ENCODE measurements at regions of chr6 and their contacts with region 1.

Region 1: GRCh38 chr6:106512048-106512967 is 117.0 kb downstream of the RTN4IP1 start:
- DNase-seq: peak; percentile 68 to 83 (median 78)
- ATAC-seq: peak; percentile 86
- H3K4me3 ChIP-seq: peak overlapping the region; percentile 92
- H3K4me3 Mint-ChIP-seq: peak overlapping the region; percentile 89 to 98 (median 96)
- H3K27ac ChIP-seq: peak overlapping the region; percentile 100
- H3K27ac Mint-ChIP-seq: peak overlapping the region; percentile 92 to 99 (median 96)
- H3K4me1 ChIP-seq: peaks cover 28 to 41% of the 10 kb centered on the region in 2 donors
- H3K4me1 Mint-ChIP-seq: peaks cover 34 to 60% (median 51%) of the 10 kb centered on the region in 7 donors
- H3K27me3 ChIP-seq: no peaks in the 10 kb centered on the region
- H3K27me3 Mint-ChIP-seq: peaks cover 0 to 40% (median 0%) of the 10 kb centered on the region in 5 donors

Region 2: GRCh38 chr6:105561486-105561885 is 950.8 kb before region 1 on chr6:
- CTCF ChIA-PET with region 1: no interaction called
- POLR2A ChIA-PET with region 1: no interaction called
- intact Hi-C with region 1: no loop called
- DNase-seq: no peak
- ATAC-seq: peak; percentile 18
- H3K4me3 ChIP-seq: no peak overlapping the region
- H3K4me3 Mint-ChIP-seq: no peak overlapping the region
- H3K27ac ChIP-seq: no peak overlapping the region
- H3K27ac Mint-ChIP-seq: no peak overlapping the region
- H3K4me1 ChIP-seq: no peaks in the 10 kb centered on the region
- H3K4me1 Mint-ChIP-seq: peaks cover 0 to 3% (median 0%) of the 10 kb centered on the region in 7 donors
- H3K27me3 ChIP-seq: no peaks in the 10 kb centered on the region
- H3K27me3 Mint-ChIP-seq: peaks cover 0 to 15% (median 6%) of the 10 kb centered on the region in 5 donors

Region 3: GRCh38 chr6:105793130-105793529 is 719.2 kb before region 1 on chr6:
- CTCF ChIA-PET with region 1: no interaction called
- POLR2A ChIA-PET with region 1: no interaction called
- intact Hi-C with region 1: loop called in 1 of 2 experiments (anchors 10 kb)
- DNase-seq: peak in 3 of 9 donors; percentile 9 to 23 (median 15)
- ATAC-seq: peak; percentile 76
- H3K4me3 ChIP-seq: no peak overlapping the region
- H3K4me3 Mint-ChIP-seq: peak overlapping the region in 1 of 10 donors; percentile 28
- H3K27ac ChIP-seq: no peak overlapping the region
- H3K27ac Mint-ChIP-seq: peak overlapping the region in 1 of 9 donors; percentile 68
- H3K4me1 ChIP-seq: peaks cover 0 to 3% of the 10 kb centered on the region in 2 donors
- H3K4me1 Mint-ChIP-seq: peaks cover 6 to 79% (median 12%) of the 10 kb centered on the region in 7 donors
- H3K27me3 ChIP-seq: no peaks in the 10 kb centered on the region
- H3K27me3 Mint-ChIP-seq: peaks cover 0 to under 1% (median 0%) of the 10 kb centered on the region in 5 donors

Region 4: GRCh38 chr6:106525111-106525881 is 13.0 kb after region 1 on chr6:
- CTCF ChIA-PET with region 1: interaction called, 74 read pairs
- POLR2A ChIA-PET with region 1: interaction called, 173 read pairs
- intact Hi-C with region 1: loop called (anchors 1 kb)
- DNase-seq: peak in 7 of 9 donors; percentile 43 to 65 (median 57)
- ATAC-seq: peak; percentile 21
- H3K4me3 ChIP-seq: peak overlapping the region; percentile 57
- H3K4me3 Mint-ChIP-seq: peak overlapping the region; percentile 80 to 96 (median 91)
- H3K27ac ChIP-seq: peak overlapping the region; percentile 86
- H3K27ac Mint-ChIP-seq: peak overlapping the region; percentile 92 to 98 (median 94)
- H3K4me1 ChIP-seq: peaks cover 11 to 13% of the 10 kb centered on the region in 2 donors
- H3K4me1 Mint-ChIP-seq: peaks cover 24 to 79% (median 63%) of the 10 kb centered on the region in 7 donors
- H3K27me3 ChIP-seq: no peaks in the 10 kb centered on the region
- H3K27me3 Mint-ChIP-seq: no peaks in the 10 kb centered on the region

Region 5: GRCh38 chr6:106539936-106540335 is 27.6 kb after region 1 on chr6:
- CTCF ChIA-PET with region 1: interaction called, 17 read pairs
- POLR2A ChIA-PET with region 1: interaction called, 14 read pairs
- intact Hi-C with region 1: no loop called
- DNase-seq: no peak
- ATAC-seq: peak; percentile 47
- H3K4me3 ChIP-seq: no peak overlapping the region
- H3K4me3 Mint-ChIP-seq: peak overlapping the region in 1 of 10 donors; percentile 18
- H3K27ac ChIP-seq: no peak overlapping the region
- H3K27ac Mint-ChIP-seq: peak overlapping the region in 8 of 9 donors; percentile 10 to 85 (median 54)
- H3K4me1 ChIP-seq: peaks cover 19 to 20% of the 10 kb centered on the region in 2 donors
- H3K4me1 Mint-ChIP-seq: peaks cover 27 to 58% (median 46%) of the 10 kb centered on the region in 7 donors
- H3K27me3 ChIP-seq: no peaks in the 10 kb centered on the region
- H3K27me3 Mint-ChIP-seq: no peaks in the 10 kb centered on the region

Region 6: DNA sequence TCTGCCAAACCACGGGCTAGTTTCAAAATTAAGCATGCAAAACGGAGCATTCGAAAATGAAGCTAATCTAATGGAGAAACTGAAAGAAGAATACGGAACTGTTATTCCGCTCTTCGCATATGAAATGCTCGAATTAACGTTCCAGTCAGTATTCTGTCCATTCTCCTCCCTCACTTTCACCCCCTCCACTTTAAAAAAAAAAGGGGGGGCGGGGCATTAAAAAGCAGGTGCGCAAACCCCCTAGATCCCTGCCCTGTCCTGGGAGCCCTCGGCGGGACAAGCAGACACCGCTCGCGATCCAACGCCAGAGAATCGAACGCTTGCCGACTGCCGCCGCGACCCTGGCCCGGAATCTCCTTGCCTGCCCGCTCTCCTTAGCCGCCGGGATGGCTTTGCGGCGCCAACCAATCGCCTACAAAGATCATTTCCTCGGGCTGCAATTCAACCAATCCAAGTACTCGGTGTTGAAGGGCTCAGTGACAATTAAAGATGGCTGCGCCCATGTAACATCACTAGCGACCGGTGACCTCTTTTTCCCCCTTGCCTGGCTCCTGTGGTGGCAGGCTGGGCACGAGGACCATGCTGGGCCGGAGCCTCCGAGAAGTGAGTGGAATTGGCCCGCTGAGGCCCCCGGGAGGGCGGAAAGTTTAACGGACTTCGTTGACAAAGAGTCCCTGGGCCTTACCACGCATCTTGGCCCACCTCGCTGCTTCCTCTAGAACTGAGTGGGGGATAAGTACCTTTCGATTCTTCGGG is 117.0 kb after region 1 on chr6 and contains the starts of genes QRSL1 and RTN4IP1:
- CTCF ChIA-PET with region 1: interaction called, 3 read pairs
- POLR2A ChIA-PET with region 1: no interaction called
- intact Hi-C with region 1: loop called (anchors 1 to 2 kb)
- DNase-seq: peak; percentile 67 to 94 (median 90)
- ATAC-seq: peak; percentile 98
- H3K4me3 ChIP-seq: peak within 1 kb of the TSS; percentile 87
- H3K4me3 Mint-ChIP-seq: peak within 1 kb of the TSS; percentile 93 to 100 (median 98)
- H3K27ac ChIP-seq: peak within 1 kb of the TSS; percentile 94
- H3K27ac Mint-ChIP-seq: peak within 1 kb of the TSS; percentile 96 to 99 (median 98)
- H3K4me1 ChIP-seq: peaks cover 7 to 13% of the 10 kb centered on the region in 2 donors
- H3K4me1 Mint-ChIP-seq: peaks cover 13 to 67% (median 38%) of the 10 kb centered on the region in 7 donors
- H3K27me3 ChIP-seq: no peaks in the 10 kb centered on the region
- H3K27me3 Mint-ChIP-seq: no peaks in the 10 kb centered on the region
- total RNA-seq, gene QRSL1: 8.0 to 14.8 (median 13.6) TPM
- total RNA-seq, gene RTN4IP1: 5.1 to 6.4 (median 5.6) TPM

Region 7: DNA sequence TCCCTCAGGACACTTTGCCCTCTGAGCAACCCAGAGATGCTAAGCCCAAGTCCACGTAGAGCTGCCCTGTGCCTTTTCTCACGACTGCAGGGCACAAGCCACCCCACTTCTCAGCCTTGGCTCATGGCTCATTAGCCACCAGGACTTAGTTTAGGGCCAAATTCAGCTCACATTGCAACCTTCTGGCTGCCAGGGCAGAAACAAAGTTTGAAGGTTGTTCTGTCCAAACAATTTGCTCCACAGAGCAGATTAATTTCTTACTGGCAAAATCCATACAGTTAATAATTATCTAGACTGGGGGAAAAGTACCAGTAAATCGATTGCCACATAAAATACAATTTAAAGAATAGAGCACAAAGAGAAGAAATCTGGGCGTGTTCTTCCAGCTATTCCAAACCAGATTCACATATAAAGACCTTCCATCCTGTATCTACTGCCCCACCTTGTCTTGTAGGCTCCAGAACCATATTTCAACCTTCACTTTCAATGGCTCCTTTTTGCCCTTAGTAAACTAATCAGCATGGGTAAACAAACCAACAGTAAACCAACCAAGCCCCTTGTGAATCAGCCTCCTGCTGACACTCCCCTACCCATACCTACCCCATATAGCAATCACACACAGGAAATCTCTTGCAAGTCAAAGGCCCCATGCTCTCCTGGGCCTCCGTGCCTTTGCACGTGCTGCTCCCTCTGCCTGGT is 219.0 kb after region 1 on chr6:
- CTCF ChIA-PET with region 1: no interaction called
- POLR2A ChIA-PET with region 1: no interaction called
- intact Hi-C with region 1: no loop called
- DNase-seq: no peak
- ATAC-seq: no peak
- H3K4me3 ChIP-seq: no peak overlapping the region
- H3K4me3 Mint-ChIP-seq: no peak overlapping the region
- H3K27ac ChIP-seq: no peak overlapping the region
- H3K27ac Mint-ChIP-seq: no peak overlapping the region
- H3K4me1 ChIP-seq: no peaks in the 10 kb centered on the region
- H3K4me1 Mint-ChIP-seq: no peaks in the 10 kb centered on the region
- H3K27me3 ChIP-seq: no peaks in the 10 kb centered on the region
- H3K27me3 Mint-ChIP-seq: peaks cover 8 to 25% (median 11%) of the 10 kb centered on the region in 5 donors

Region 8: DNA sequence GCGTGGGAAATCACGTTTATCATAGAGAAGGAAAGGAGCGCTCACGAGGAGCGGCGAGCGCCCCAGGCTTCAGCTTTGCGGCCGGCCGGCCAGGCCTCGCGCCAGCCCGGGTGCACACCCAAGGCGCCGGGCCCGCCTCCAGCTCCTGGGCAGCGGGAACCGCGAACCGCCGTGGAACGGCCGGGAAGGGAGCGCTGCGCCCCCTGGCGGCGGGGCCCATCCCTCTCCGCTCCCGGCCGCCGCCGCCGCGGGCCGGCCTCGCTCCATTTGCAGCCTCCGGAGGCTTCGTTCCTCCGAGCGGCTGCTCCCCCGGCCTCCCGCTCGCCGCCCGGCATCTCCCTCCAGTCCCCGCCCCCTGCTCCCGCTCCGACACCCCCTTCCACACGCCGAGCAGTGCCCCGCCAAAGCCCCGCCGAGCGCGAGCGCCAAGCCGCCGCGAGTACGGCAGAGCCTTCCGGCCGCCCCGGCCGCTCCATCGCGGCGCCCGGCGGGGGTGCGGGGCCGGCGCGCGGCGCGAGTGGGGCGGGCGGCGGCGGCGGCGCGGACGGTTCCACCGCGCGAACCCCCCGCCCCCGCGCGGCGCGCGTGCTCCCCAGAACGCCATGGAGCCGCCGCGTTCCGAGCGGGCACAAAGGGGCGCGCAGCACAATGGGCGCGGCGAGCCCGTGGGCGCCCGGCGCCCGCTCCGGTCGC is 602.1 kb after region 1 on chr6:
- CTCF ChIA-PET with region 1: no interaction called
- POLR2A ChIA-PET with region 1: no interaction called
- intact Hi-C with region 1: loop called in 1 of 2 experiments (anchors 10 kb)
- DNase-seq: peak; percentile 39 to 85 (median 67)
- ATAC-seq: peak; percentile 88
- H3K4me3 ChIP-seq: peak overlapping the region; percentile 32
- H3K4me3 Mint-ChIP-seq: peak overlapping the region; percentile 71 to 88 (median 85)
- H3K27ac ChIP-seq: no peak overlapping the region
- H3K27ac Mint-ChIP-seq: peak overlapping the region in 5 of 9 donors; percentile 49 to 77 (median 63)
- H3K4me1 ChIP-seq: peaks cover 14% of the 10 kb centered on the region in 2 donors
- H3K4me1 Mint-ChIP-seq: peaks cover 8 to 21% (median 18%) of the 10 kb centered on the region in 7 donors
- H3K27me3 ChIP-seq: no peaks in the 10 kb centered on the region
- H3K27me3 Mint-ChIP-seq: peaks cover 0 to 22% (median 7%) of the 10 kb centered on the region in 5 donors

Measured in naive thymus-derived CD4-positive, alpha-beta T cell (primary cell).